ENCODE measurements at regions of chr5 and their contacts with region 1.

Region 1: DNA sequence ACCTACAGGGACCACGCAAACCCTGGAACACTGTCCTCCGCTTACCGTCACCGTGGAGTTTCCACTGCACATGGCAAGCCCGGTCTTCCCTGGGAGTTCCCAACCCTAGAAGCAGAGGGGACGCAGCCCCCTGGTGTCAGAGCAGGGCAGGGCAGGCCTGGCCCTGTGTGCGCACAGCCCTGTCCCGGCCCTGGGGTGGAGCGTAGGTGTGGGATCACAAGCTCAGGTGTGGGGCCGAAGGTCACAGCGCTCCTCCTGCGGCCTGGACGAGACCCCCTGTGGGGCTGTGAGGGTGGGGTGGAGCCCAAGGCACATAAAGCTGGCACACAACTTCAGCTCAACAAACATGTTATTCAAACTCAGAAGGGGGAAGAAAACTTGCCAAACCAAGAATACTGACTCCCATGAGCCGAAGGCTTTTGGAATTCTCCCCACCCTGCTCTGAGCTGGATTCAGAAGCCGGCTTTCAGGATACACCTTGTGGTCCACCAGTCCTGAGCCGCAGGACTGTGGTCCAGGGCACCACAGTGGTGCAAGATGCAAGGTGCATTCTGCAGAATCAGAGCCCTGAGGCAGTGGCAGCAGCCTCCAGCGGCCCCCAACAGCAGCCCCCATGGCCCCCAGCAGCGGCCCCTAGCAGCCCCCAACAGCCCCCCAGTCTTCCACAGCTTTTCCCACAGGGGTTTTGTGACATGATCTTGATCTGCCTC is 11.8 kb upstream of the EXOC3 start:
- DNase-seq: no peak
- ATAC-seq: peak; percentile 71
- H3K4me3 ChIP-seq: no peak overlapping the region
- H3K27ac ChIP-seq: no peak overlapping the region
- H3K4me1 ChIP-seq: no peaks in the 10 kb centered on the region
- H3K27me3 ChIP-seq: no peaks in the 10 kb centered on the region
- CTCF ChIP-seq: peak; percentile 60

Region 2: DNA sequence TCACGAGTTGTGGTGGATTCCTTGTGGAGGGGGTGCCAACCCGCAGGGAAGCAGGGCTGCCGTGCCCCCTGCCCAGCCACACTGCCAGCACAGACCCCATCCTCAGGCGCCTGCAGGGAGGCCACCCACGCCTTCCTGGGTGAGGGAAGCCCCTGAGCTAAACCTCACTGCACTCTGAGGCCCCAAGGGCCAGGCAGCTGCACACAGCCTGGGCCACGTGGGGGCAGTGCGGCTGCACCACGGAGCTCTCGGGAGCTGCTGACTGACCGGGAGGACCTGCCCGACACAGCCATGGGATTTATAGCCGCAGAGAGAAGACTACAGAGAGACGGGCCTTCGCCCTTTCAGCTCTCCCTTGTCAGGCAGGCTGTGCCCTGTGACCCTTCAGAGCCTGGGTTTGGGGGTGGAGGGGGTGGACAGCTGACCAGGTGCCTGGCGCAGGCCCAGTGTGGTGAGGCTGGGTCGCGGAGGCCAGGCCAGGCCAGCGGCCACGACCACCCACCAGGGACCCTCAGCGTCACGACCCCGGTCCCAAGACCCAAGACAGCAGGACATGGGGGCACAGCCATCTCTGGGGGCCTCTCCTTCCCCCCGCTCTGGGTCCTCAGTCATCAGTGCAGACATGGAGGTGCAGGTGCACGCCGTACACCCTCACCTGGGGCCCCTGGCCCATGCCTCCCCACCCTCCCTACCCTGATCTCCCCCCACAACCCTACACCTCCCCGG is 113.9 kb before region 1 on chr5:
- intact Hi-C with region 1: loop called (anchors 10 kb)
- DNase-seq: peak; percentile 67
- ATAC-seq: peak; percentile 54
- H3K4me3 ChIP-seq: no peak overlapping the region
- H3K27ac ChIP-seq: no peak overlapping the region
- H3K4me1 ChIP-seq: peaks cover 7% of the 10 kb centered on the region
- H3K27me3 ChIP-seq: peaks cover 11% of the 10 kb centered on the region
- CTCF ChIP-seq: peak; percentile 44